Naive thymus-derived CD4-positive, alpha-beta T cell (primary cell): ENCODE measurements at regions of chr3 and their contacts with region 1.

Region 1: DNA sequence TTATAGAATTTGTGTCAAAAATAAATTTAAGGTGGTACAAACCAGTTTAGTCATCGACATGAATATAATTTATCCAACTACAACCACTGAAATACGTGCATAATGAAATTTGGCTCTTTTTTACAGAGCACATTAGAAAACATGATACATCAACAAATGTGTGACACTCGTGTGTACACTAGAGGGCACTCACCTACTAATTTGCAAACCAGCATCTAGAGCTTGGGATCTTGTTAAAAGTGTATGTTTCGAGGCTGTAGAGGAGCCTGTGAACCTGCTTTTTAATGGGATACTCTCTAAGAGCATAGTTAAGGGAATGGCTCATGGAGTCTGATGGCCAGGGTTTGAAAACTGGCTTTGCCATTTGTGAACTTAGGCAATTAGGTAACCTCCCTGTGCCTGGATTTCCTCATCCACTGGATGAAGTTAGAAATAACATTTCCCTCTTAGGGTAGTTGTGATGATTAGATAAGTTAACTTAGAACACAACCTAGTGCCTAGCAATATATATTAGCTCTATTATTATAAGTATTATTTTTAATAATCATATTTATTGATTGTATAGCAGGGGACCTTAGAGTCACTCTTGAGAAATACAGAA is 8.8 kb upstream of the CPOX start:
- DNase-seq: peak in 5 of 9 donors; percentile 29 to 48 (median 35)
- ATAC-seq: peak; percentile 80
- H3K4me3 ChIP-seq: no peak overlapping the region
- H3K4me3 Mint-ChIP-seq: no peak overlapping the region
- H3K27ac ChIP-seq: no peak overlapping the region
- H3K27ac Mint-ChIP-seq: no peak overlapping the region
- H3K4me1 ChIP-seq: no peaks in the 10 kb centered on the region
- H3K4me1 Mint-ChIP-seq: peaks cover 0 to 10% (median 0%) of the 10 kb centered on the region in 7 donors
- H3K27me3 ChIP-seq: no peaks in the 10 kb centered on the region
- H3K27me3 Mint-ChIP-seq: peaks cover 9 to 22% (median 13%) of the 10 kb centered on the region in 5 donors

Region 2: GRCh38 chr3:98657457-98657856 is 55.3 kb after region 1 on chr3:
- CTCF ChIA-PET with region 1: interaction called, 7 read pairs
- POLR2A ChIA-PET with region 1: no interaction called
- intact Hi-C with region 1: loop called (anchors 1 kb)
- DNase-seq: peak; percentile 13 to 53 (median 41)
- ATAC-seq: peak; percentile 81
- H3K4me3 ChIP-seq: no peak overlapping the region
- H3K4me3 Mint-ChIP-seq: peak overlapping the region in 5 of 10 donors; percentile 6 to 50 (median 47)
- H3K27ac ChIP-seq: no peak overlapping the region
- H3K27ac Mint-ChIP-seq: peak overlapping the region in 1 of 9 donors; percentile 5
- H3K4me1 ChIP-seq: no peaks in the 10 kb centered on the region
- H3K4me1 Mint-ChIP-seq: peaks cover 0 to 15% (median 5%) of the 10 kb centered on the region in 7 donors
- H3K27me3 ChIP-seq: peaks cover 0 to 2% of the 10 kb centered on the region in 2 donors
- H3K27me3 Mint-ChIP-seq: peaks cover 15 to 31% (median 26%) of the 10 kb centered on the region in 5 donors

Region 3: GRCh38 chr3:98839846-98840245 is 237.7 kb after region 1 on chr3:
- CTCF ChIA-PET with region 1: no interaction called
- POLR2A ChIA-PET with region 1: no interaction called
- intact Hi-C with region 1: no loop called
- DNase-seq: no peak
- ATAC-seq: no peak
- H3K4me3 ChIP-seq: no peak overlapping the region
- H3K4me3 Mint-ChIP-seq: no peak overlapping the region
- H3K27ac ChIP-seq: no peak overlapping the region
- H3K27ac Mint-ChIP-seq: no peak overlapping the region
- H3K4me1 ChIP-seq: no peaks in the 10 kb centered on the region
- H3K4me1 Mint-ChIP-seq: peaks cover 0 to 6% (median 0%) of the 10 kb centered on the region in 7 donors
- H3K27me3 ChIP-seq: no peaks in the 10 kb centered on the region
- H3K27me3 Mint-ChIP-seq: no peaks in the 10 kb centered on the region

Region 4: DNA sequence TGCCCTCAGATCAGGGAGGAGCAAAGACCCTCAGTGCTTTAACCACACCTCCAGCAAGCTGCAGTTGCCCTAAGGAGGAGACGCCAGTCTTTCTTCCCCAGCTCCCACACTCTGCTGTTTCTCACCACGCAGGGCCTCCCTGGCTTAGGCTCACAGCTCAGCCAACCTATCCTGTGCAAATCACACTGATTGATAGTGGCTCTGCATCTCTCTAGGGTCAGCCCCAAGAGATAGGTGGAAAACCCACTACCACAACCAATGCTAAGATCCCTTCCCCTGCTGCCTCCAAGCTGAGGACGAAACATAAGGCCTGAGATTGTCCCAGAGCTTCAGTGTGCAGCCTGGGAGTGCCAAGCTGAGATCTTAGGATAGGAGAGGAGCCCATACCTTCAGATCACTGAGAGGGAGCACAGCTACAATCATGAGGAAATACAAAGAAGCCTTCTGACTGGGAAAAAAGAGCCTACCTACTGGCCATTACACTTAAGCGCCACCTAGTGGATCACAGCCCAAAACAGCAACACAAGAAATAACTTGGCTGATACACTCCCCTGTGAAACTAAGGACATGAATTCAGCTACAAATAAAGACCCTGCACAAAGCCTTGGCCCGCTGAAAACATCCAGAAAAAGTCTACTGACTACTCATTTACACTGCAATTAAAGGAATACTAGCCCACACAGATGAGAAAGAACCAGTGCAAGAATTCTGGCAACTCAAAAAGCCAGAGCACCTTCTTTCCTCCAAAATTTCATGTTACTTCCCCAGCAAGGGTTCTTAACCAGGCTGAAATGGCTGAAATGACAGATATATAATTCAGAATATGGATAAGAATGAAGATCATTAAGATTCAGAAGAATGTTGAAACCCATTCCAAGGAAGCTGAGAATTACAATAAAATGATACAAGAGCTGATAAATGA is 570.8 kb after region 1 on chr3:
- CTCF ChIA-PET with region 1: no interaction called
- POLR2A ChIA-PET with region 1: no interaction called
- intact Hi-C with region 1: loop called in 1 of 2 experiments (anchors 5 kb)
- DNase-seq: peak in 3 of 9 donors; percentile 10 to 28 (median 10)
- ATAC-seq: no peak
- H3K4me3 ChIP-seq: no peak overlapping the region
- H3K4me3 Mint-ChIP-seq: no peak overlapping the region
- H3K27ac ChIP-seq: no peak overlapping the region
- H3K27ac Mint-ChIP-seq: no peak overlapping the region
- H3K4me1 ChIP-seq: no peaks in the 10 kb centered on the region
- H3K4me1 Mint-ChIP-seq: no peaks in the 10 kb centered on the region
- H3K27me3 ChIP-seq: no peaks in the 10 kb centered on the region
- H3K27me3 Mint-ChIP-seq: no peaks in the 10 kb centered on the region